ENCODE measurements at regions of chr17 and their contacts with region 1.

Region 1: GRCh38 chr17:35214631-35215273 is 20.6 kb upstream of the SLC35G3 start:
- DNase-seq: peak; percentile 54
- ATAC-seq: peak; percentile 67
- H3K4me3 Mint-ChIP-seq: peak overlapping the region; percentile 49
- H3K27ac Mint-ChIP-seq: peak overlapping the region; percentile 80
- H3K4me1 Mint-ChIP-seq: peaks cover 85% of the 10 kb centered on the region
- H3K27me3 Mint-ChIP-seq: no peaks in the 10 kb centered on the region

Region 2: GRCh38 chr17:34300652-34301370 is 913.9 kb before region 1 on chr17:
- CTCF ChIA-PET with region 1: no interaction called
- POLR2A ChIA-PET with region 1: no interaction called
- intact Hi-C with region 1: no loop called
- DNase-seq: no peak
- ATAC-seq: no peak
- H3K4me3 Mint-ChIP-seq: no peak overlapping the region
- H3K27ac Mint-ChIP-seq: no peak overlapping the region
- H3K4me1 Mint-ChIP-seq: peaks cover 3% of the 10 kb centered on the region
- H3K27me3 Mint-ChIP-seq: peaks cover 19% of the 10 kb centered on the region

Region 3: GRCh38 chr17:35063514-35064223 is 151.1 kb before region 1 on chr17 and contains the start of gene RFFL:
- CTCF ChIA-PET with region 1: no interaction called
- POLR2A ChIA-PET with region 1: interaction called, 3 read pairs
- intact Hi-C with region 1: loop called in 1 of 2 experiments (anchors 1 kb)
- DNase-seq: peak; percentile 94
- ATAC-seq: peak; percentile 98
- H3K4me3 Mint-ChIP-seq: peak within 1 kb of the TSS; percentile 12
- H3K27ac Mint-ChIP-seq: peak within 1 kb of the TSS; percentile 80
- H3K4me1 Mint-ChIP-seq: peaks cover 62% of the 10 kb centered on the region
- H3K27me3 Mint-ChIP-seq: no peaks in the 10 kb centered on the region
- total RNA-seq, gene RFFL: 19.2 to 22.9 TPM

Region 4: GRCh38 chr17:35103271-35103670 is 111.5 kb before region 1 on chr17:
- CTCF ChIA-PET with region 1: no interaction called
- POLR2A ChIA-PET with region 1: no interaction called
- intact Hi-C with region 1: no loop called
- DNase-seq: no peak
- ATAC-seq: no peak
- H3K4me3 Mint-ChIP-seq: no peak overlapping the region
- H3K27ac Mint-ChIP-seq: no peak overlapping the region
- H3K4me1 Mint-ChIP-seq: peaks cover 5% of the 10 kb centered on the region
- H3K27me3 Mint-ChIP-seq: no peaks in the 10 kb centered on the region

Region 5: GRCh38 chr17:35141681-35142466 is 72.9 kb before region 1 on chr17 and contains the start of gene NLE1:
- CTCF ChIA-PET with region 1: interaction called, 3 read pairs
- POLR2A ChIA-PET with region 1: no interaction called
- intact Hi-C with region 1: loop called in 1 of 2 experiments (anchors 5 kb)
- DNase-seq: peak; percentile 94
- ATAC-seq: peak; percentile 93
- H3K4me3 Mint-ChIP-seq: peak within 1 kb of the TSS; percentile 80
- H3K27ac Mint-ChIP-seq: peak within 1 kb of the TSS; percentile 81
- H3K4me1 Mint-ChIP-seq: peaks cover 14% of the 10 kb centered on the region
- H3K27me3 Mint-ChIP-seq: no peaks in the 10 kb centered on the region
- total RNA-seq, gene NLE1: 38.1 to 40.6 TPM

Region 6: DNA sequence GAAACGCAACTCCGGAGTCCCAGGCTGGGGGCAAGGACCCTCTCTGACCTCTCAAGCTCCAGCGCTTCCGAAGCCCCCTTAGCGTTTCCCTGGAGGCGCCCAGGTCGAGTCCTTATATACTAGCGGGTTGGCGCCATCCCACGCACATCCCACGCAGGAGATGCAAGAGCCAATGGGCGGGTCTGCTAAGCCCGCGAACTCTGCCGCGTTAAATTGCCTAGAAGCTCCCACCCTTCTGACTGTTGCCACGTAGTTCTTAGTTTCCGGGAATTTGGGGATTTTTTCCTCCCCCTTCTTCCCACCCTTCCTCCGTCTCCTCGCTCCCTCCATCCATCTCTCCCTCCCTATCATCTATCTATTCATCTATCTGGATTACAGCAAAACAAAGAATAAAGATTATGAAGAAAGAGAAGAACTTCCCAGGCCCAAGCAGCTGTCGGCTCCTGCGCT is 158.8 kb after region 1 on chr17 and contains the start of gene SLFN11:
- CTCF ChIA-PET with region 1: no interaction called
- POLR2A ChIA-PET with region 1: interaction called, 4 read pairs
- intact Hi-C with region 1: loop called in 1 of 2 experiments (anchors 10 kb)
- DNase-seq: peak; percentile 95
- ATAC-seq: peak; percentile 70
- H3K4me3 Mint-ChIP-seq: peak within 1 kb of the TSS; percentile 85
- H3K27ac Mint-ChIP-seq: peak within 1 kb of the TSS; percentile 98
- H3K4me1 Mint-ChIP-seq: peaks cover 50% of the 10 kb centered on the region
- H3K27me3 Mint-ChIP-seq: peaks cover 1% of the 10 kb centered on the region
- total RNA-seq, gene SLFN11: 63.7 to 67.9 TPM

Region 7: DNA sequence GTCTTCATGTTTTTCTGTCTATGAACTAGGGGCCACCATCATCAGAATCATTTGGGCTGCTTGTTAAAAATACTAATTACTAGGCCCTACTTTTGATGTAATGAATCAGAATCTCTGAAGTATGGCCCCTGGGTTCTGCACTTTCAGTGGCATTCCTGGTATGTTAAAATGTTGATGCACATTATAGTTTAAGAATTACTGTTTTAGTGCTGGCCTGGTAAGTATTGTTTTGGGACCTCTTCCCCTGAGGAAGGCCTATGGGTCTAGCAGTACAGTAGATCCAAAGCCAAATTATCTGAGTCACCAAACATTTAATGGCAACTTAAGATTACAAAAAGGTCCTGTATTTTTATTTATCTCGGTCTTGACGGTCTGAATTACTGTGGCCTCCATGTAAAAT is 431.2 kb after region 1 on chr17:
- CTCF ChIA-PET with region 1: no interaction called
- POLR2A ChIA-PET with region 1: no interaction called
- intact Hi-C with region 1: no loop called
- DNase-seq: no peak
- ATAC-seq: no peak
- H3K4me3 Mint-ChIP-seq: no peak overlapping the region
- H3K27ac Mint-ChIP-seq: no peak overlapping the region
- H3K4me1 Mint-ChIP-seq: no peaks in the 10 kb centered on the region
- H3K27me3 Mint-ChIP-seq: no peaks in the 10 kb centered on the region

Measured in activated CD4-positive, alpha-beta T cell treated with anti-CD3 and anti-CD28 coated beads for 36 hours (primary cell).